ENCODE measurements at regions of chr9 and their contacts with region 1.

Region 1: GRCh38 chr9:6015278-6016157 is at the start of gene RANBP6:
- DNase-seq: peak; percentile 51
- ATAC-seq: peak; percentile 99
- H3K4me3 ChIP-seq: peak within 1 kb of the TSS; percentile 83
- H3K27ac ChIP-seq: peak within 1 kb of the TSS; percentile 80
- H3K4me1 ChIP-seq: peaks cover 12% of the 10 kb centered on the region
- H3K27me3 ChIP-seq: no peaks in the 10 kb centered on the region
- CTCF ChIP-seq: no peak
- EP300 ChIP-seq: no peak
- POLR2A ChIP-seq: peak; percentile 86
- RAD21 ChIP-seq: no peak
- polyA plus RNA-seq, gene RANBP6: 10.9 to 11.7 TPM

Region 2: DNA sequence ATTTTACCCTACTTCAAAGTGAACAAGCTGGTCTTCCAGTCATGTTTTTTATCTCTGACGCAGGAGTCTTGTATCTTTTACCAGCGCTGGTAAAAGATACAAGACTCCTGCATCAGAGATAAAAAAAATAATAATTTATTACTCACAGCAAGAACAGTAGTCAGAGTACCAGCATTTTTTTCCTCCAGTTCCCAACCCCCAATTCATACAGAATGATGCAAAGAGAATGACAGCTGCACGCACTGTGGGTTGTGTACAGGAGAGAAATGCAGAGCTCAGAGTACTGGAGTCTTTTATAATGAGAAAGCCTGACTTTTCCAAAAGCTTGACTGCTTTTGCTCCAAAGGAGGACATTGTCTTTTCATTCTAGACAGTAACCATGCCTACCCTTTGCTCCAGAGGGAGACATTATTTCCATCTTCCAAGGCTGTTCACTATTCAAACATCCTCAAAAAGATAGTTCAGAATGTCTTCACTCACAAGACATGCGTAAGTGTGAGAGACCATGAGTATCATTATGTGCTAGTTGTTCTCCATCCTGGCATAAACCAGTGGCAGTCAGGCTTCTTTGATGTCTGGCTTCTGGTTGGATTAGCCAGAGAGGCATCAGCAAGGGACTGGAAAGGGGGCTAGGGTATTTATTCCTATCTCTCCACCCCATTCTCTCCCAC is 14.2 kb after region 1 on chr9:
- CTCF ChIA-PET with region 1: interaction called, 28 read pairs
- POLR2A ChIA-PET with region 1: interaction called, 5 read pairs
- RAD21 ChIA-PET with region 1: interaction called, 5 read pairs
- SMC1A ChIA-PET with region 1: interaction called, 6 read pairs
- in situ Hi-C with region 1: no loop called
- intact Hi-C with region 1: no loop called
- DNase-seq: no peak
- ATAC-seq: no peak; the same call in 1 of the 3 replicates
- H3K4me3 ChIP-seq: no peak overlapping the region
- H3K27ac ChIP-seq: no peak overlapping the region
- H3K4me1 ChIP-seq: no peaks in the 10 kb centered on the region
- H3K27me3 ChIP-seq: no peaks in the 10 kb centered on the region
- CTCF ChIP-seq: no peak
- EP300 ChIP-seq: no peak
- POLR2A ChIP-seq: no peak
- RAD21 ChIP-seq: no peak

Measured in GM12878 (cell line).